Activated CD8-positive, alpha-beta T cell treated with anti-CD3 and anti-CD28 coated beads, Interleukin-2, amount 10 ng/mL, durations not matched to agents 7 days and 5 days (primary cell): ENCODE measurements at regions of chr16 and their contacts with region 1.

Region 1: GRCh38 chr16:84186685-84187437 is at the start of gene TAF1C:
- DNase-seq: peak; percentile 93
- ATAC-seq: peak; percentile 89
- H3K4me3 Mint-ChIP-seq: peak within 1 kb of the TSS; percentile 94
- H3K27ac Mint-ChIP-seq: peak within 1 kb of the TSS; percentile 92
- H3K4me1 Mint-ChIP-seq: peaks cover 25% of the 10 kb centered on the region
- H3K27me3 Mint-ChIP-seq: no peaks in the 10 kb centered on the region
- total RNA-seq, gene TAF1C: 53.4 to 62.3 TPM

Region 2: DNA sequence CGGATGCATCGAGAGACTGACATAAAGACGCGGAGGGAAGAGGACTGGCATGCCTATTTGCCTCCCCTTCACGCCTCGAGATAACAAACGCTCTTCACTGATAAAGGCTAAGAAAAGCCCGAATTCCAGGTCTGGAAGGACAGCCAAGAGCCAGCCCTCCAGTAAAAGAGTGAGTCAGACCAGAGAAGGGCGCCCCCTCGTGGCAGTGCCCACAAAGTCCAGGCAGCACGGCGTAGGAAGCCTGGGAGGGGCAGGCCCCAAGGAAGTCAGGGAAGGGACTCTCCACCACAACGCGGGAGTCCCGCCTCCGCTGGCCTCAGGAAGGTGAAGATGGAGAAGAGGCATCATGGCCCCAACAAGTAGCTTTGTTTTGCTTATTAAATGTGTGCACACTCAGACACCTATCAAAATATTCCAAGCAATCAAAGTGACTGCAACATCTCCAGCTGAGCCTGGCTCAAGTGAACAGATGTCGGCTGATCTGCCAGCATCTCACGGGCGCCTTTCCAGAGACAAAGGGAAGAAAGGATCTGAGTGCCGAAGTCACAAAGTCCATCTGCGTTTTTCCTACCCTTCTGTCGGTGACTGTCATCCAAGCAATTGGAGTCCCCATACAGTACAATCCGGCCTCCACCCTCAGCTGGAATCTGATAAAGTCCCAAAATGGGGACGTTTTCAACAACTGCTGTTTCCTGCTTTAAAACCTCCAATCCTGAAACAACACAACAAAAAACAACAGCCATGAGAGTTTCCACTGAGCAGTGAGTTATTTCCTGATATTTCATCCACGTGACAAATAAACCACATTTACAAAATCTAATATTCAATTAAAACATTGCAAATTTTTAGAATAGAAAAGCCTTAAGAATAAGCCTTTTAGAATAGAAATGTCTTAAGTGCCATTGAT is 123.9 kb before region 1 on chr16:
- CTCF ChIA-PET with region 1: interaction called, 12 read pairs
- POLR2A ChIA-PET with region 1: no interaction called
- DNase-seq: peak; percentile 73
- ATAC-seq: peak; percentile 88
- H3K4me3 Mint-ChIP-seq: no peak overlapping the region
- H3K27ac Mint-ChIP-seq: no peak overlapping the region
- H3K4me1 Mint-ChIP-seq: peaks cover 2% of the 10 kb centered on the region
- H3K27me3 Mint-ChIP-seq: no peaks in the 10 kb centered on the region

Region 3: DNA sequence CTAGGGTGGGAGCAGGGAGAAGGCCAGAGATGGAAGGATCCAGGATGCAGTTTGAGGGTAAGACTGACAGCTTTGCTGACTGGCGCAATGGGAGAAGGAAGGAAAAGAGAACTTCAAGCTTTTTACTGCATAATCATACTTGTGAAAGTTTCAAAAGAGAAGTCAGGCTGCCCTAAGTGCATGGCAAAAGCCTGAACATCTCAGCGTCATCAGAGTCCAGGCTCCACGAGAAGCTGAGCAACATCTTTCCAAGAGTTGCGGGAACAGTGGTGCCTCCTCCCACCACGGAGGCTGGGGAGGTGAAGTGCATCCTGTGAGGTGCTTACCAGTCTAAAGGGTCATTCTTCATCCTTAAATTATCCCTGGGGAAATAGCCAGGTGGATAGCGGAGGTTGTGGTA is 117.3 kb before region 1 on chr16:
- CTCF ChIA-PET with region 1: interaction called, 12 read pairs
- POLR2A ChIA-PET with region 1: no interaction called
- DNase-seq: no peak
- ATAC-seq: no peak
- H3K4me3 Mint-ChIP-seq: no peak overlapping the region
- H3K27ac Mint-ChIP-seq: no peak overlapping the region
- H3K4me1 Mint-ChIP-seq: peaks cover 8% of the 10 kb centered on the region
- H3K27me3 Mint-ChIP-seq: no peaks in the 10 kb centered on the region

Region 4: GRCh38 chr16:84116720-84117493 is 70.0 kb before region 1 on chr16 and contains the start of gene MBTPS1:
- CTCF ChIA-PET with region 1: interaction called, 22 read pairs
- POLR2A ChIA-PET with region 1: interaction called, 11 read pairs
- DNase-seq: peak; percentile 98
- ATAC-seq: peak; percentile 95
- H3K4me3 Mint-ChIP-seq: peak within 1 kb of the TSS; percentile 93
- H3K27ac Mint-ChIP-seq: peak within 1 kb of the TSS; percentile 95
- H3K4me1 Mint-ChIP-seq: peaks cover 22% of the 10 kb centered on the region
- H3K27me3 Mint-ChIP-seq: no peaks in the 10 kb centered on the region
- total RNA-seq, gene MBTPS1: 49.3 to 52.7 TPM

Region 5: DNA sequence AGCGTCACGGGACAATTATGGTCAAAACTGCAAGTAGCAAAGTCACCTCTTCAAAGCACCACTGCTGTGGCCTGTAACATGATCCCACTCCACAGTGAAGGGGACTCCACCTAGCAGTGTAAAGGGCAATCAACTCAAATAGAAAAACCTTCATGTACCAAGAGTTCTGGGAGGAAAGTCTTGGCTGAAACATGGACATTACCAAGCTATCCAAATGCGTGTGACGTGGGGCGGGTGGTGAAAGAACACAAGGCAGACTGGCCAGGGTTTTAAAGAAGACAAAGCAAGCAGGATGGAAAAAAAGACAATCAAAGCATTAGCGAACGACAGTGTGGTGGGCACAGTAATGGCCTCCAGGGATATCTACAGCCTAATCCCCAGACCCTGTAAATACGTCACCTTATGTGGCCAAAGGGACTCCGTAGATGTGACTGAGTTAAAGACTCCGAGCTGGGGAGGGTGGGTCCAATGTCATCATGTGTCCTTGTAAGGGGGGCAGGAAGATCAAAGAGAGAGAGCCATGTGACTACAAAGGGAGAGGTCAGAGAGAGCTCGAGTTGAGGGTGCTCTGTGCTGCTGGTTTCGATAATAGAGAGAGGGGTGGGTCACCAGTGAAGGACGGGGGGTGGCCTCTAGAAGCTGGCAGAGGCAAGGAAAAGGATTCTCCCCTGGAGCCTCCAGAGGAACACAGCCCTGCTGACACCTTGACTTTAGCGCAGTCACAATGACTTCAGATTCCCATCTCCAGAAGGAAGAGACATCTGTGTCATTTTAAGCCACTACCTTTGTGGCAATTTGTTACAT is 47.8 kb before region 1 on chr16:
- CTCF ChIA-PET with region 1: interaction called, 11 read pairs
- POLR2A ChIA-PET with region 1: no interaction called
- DNase-seq: peak; percentile 61
- ATAC-seq: peak; percentile 73
- H3K4me3 Mint-ChIP-seq: no peak overlapping the region
- H3K27ac Mint-ChIP-seq: peak overlapping the region; percentile 66
- H3K4me1 Mint-ChIP-seq: peaks cover 35% of the 10 kb centered on the region
- H3K27me3 Mint-ChIP-seq: no peaks in the 10 kb centered on the region

Region 6: GRCh38 chr16:84169765-84170310 is 17.0 kb before region 1 on chr16:
- CTCF ChIA-PET with region 1: interaction called, 40 read pairs
- POLR2A ChIA-PET with region 1: no interaction called
- DNase-seq: no peak
- ATAC-seq: no peak
- H3K4me3 Mint-ChIP-seq: no peak overlapping the region
- H3K27ac Mint-ChIP-seq: no peak overlapping the region
- H3K4me1 Mint-ChIP-seq: no peaks in the 10 kb centered on the region
- H3K27me3 Mint-ChIP-seq: peaks cover 15% of the 10 kb centered on the region

Region 7: DNA sequence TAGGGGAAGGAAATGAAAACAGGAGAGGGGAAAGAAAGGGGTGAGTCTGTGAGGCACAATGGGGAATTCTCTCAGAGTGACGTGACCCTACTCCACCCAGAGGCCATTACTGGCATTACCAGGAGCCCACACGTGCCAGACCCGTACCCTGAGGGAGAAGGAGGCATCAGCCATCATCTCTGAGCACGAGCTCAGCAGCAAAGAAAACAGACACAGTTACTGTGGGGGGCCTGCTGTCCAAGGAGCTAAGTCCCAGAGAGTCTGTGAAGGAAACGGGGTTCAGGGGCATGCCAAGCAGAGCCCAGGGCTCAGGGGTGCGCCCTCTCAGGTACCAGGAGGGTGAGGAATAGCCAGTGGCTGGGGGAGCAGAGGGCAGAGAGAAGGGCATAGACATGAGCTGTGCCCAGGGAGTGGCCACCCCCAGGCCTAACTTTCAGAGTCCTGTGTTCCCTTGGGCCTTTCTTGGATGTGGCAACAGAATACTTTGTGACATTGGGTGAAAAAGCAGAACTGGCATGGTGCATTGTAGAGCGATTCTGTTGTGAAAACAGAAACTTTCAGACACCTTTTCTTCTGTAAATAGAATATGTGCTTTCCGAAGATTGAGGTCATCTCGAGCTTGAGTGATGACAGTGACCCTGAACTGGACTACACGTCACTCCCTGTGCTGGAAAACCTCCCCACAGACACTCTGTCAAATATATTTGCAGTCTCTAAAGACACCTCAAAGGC is 11.3 kb before region 1 on chr16:
- CTCF ChIA-PET with region 1: interaction called, 40 read pairs
- POLR2A ChIA-PET with region 1: interaction called, 5 read pairs
- DNase-seq: peak; percentile 74
- ATAC-seq: peak; percentile 93
- H3K4me3 Mint-ChIP-seq: no peak overlapping the region
- H3K27ac Mint-ChIP-seq: no peak overlapping the region
- H3K4me1 Mint-ChIP-seq: peaks cover 4% of the 10 kb centered on the region
- H3K27me3 Mint-ChIP-seq: peaks cover 3% of the 10 kb centered on the region